Activated B cell treated with CpG ODN at 0.5 μM for 24 hours (primary cell): ENCODE measurements at regions of chr9 and their contacts with region 1.

Region 1: GRCh38 chr9:124006448-124007118 is 5.0 kb upstream of the LHX2 start:
- DNase-seq: no peak
- ATAC-seq: peak; percentile 33
- H3K4me3 Mint-ChIP-seq: peak overlapping the region; percentile 28
- H3K27ac Mint-ChIP-seq: peak overlapping the region; percentile 46
- H3K4me1 Mint-ChIP-seq: peaks cover 42% of the 10 kb centered on the region
- H3K27me3 Mint-ChIP-seq: peaks cover 84% of the 10 kb centered on the region
- CTCF ChIP-seq: no peak

Region 2: GRCh38 chr9:124020520-124021384 is 14.2 kb after region 1 on chr9:
- CTCF ChIA-PET with region 1: interaction called, 3 read pairs
- POLR2A ChIA-PET with region 1: interaction called, 3 read pairs
- intact Hi-C with region 1: loop called (anchors 1 kb)
- DNase-seq: peak; percentile 15
- ATAC-seq: peak; percentile 62
- H3K4me3 Mint-ChIP-seq: no peak overlapping the region
- H3K27ac Mint-ChIP-seq: peak overlapping the region; percentile 12
- H3K4me1 Mint-ChIP-seq: peaks cover 36% of the 10 kb centered on the region
- H3K27me3 Mint-ChIP-seq: peaks cover 74% of the 10 kb centered on the region
- CTCF ChIP-seq: no peak